MCF 10A (cell line): ENCODE measurements at regions of chr16 and their contacts with region 1.

Region 1: GRCh38 chr16:2770057-2770951 is 6.8 kb downstream of the ELOB start:
- DNase-seq: peak; percentile 52
- H3K4me3 Mint-ChIP-seq: peak overlapping the region; percentile 74
- H3K27ac Mint-ChIP-seq: peak overlapping the region; percentile 81
- H3K4me1 Mint-ChIP-seq: peaks cover 50% of the 10 kb centered on the region
- H3K27me3 Mint-ChIP-seq: no peaks in the 10 kb centered on the region
- CTCF ChIP-seq: peak; percentile 26

Region 2: DNA sequence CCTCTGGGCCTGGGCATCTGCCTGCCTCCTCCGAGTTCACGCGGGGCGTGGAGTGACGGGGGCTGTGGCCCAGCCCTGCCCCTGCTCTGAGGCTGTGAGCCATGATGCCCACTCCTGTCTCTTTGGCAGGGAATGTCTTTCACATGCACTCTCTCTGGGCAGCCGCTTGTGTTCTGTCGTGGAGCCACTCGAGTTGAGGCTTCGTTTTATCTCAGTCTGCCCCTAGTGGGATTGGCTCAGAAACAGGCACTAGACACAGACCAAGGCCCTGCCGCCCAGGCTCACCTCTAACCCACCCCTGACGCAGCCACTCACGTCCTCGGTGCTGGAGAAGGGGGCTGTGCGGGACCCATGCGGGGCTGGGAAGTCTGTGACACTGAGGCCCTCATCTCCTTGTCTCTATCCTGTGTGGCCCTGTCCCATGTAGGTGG is 155.5 kb before region 1 on chr16:
- CTCF ChIA-PET with region 1: no interaction called
- POLR2A ChIA-PET with region 1: no interaction called
- intact Hi-C with region 1: no loop called
- DNase-seq: no peak
- H3K4me3 Mint-ChIP-seq: no peak overlapping the region
- H3K27ac Mint-ChIP-seq: no peak overlapping the region
- H3K4me1 Mint-ChIP-seq: no peaks in the 10 kb centered on the region
- H3K27me3 Mint-ChIP-seq: no peaks in the 10 kb centered on the region
- CTCF ChIP-seq: no peak

Region 3: GRCh38 chr16:2682209-2683021 is 87.9 kb before region 1 on chr16 and contains the start of gene KCTD5:
- CTCF ChIA-PET with region 1: no interaction called
- POLR2A ChIA-PET with region 1: interaction called, 19 read pairs
- intact Hi-C with region 1: no loop called
- DNase-seq: peak; percentile 94
- H3K4me3 Mint-ChIP-seq: peak within 1 kb of the TSS; percentile 96
- H3K27ac Mint-ChIP-seq: peak within 1 kb of the TSS; percentile 97
- H3K4me1 Mint-ChIP-seq: no peaks in the 10 kb centered on the region
- H3K27me3 Mint-ChIP-seq: no peaks in the 10 kb centered on the region
- CTCF ChIP-seq: no peak
- total RNA-seq, gene KCTD5: 49.4 and 51.6 TPM in 2 replicates

Region 4: GRCh38 chr16:2720719-2721633 is 49.3 kb before region 1 on chr16:
- CTCF ChIA-PET with region 1: no interaction called
- POLR2A ChIA-PET with region 1: interaction called, 10 read pairs
- intact Hi-C with region 1: loop called (anchors 1 kb)
- DNase-seq: peak; percentile 86
- H3K4me3 Mint-ChIP-seq: peak overlapping the region; percentile 73
- H3K27ac Mint-ChIP-seq: peak overlapping the region; percentile 46
- H3K4me1 Mint-ChIP-seq: peaks cover 6% of the 10 kb centered on the region
- H3K27me3 Mint-ChIP-seq: no peaks in the 10 kb centered on the region
- CTCF ChIP-seq: peak; percentile 78

Region 5: DNA sequence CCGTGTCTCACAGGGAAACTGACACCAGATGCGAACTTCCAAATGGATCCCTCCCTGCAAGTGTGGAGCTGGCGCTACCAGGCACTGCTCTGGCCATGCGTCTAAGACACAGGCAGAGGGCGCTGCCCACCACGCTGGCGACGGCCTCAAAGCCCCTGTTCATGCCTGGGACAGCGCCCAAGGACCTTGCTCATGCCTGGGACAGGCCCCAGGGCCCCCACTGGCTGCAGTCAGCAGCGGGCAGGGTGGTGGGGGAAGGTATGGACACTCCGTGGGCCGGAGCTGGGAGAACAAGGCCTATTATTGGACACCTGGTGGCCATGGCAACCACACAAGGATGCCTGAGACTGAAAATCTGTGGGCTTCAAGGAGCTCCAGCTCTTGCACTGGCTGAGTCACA is 68.6 kb after region 1 on chr16:
- CTCF ChIA-PET with region 1: no interaction called
- POLR2A ChIA-PET with region 1: no interaction called
- intact Hi-C with region 1: loop called (anchors 2 kb)
- DNase-seq: peak; percentile 69
- H3K4me3 Mint-ChIP-seq: no peak overlapping the region
- H3K27ac Mint-ChIP-seq: no peak overlapping the region
- H3K4me1 Mint-ChIP-seq: peaks cover 31% of the 10 kb centered on the region
- H3K27me3 Mint-ChIP-seq: no peaks in the 10 kb centered on the region
- CTCF ChIP-seq: peak; percentile 80

Region 6: GRCh38 chr16:2867987-2868789 is 97.9 kb after region 1 on chr16:
- CTCF ChIA-PET with region 1: interaction called, 15 read pairs
- POLR2A ChIA-PET with region 1: interaction called, 61 read pairs
- intact Hi-C with region 1: loop called (anchors 2 kb)
- DNase-seq: peak; percentile 91
- H3K4me3 Mint-ChIP-seq: peak overlapping the region; percentile 89
- H3K27ac Mint-ChIP-seq: peak overlapping the region; percentile 94
- H3K4me1 Mint-ChIP-seq: peaks cover 4% of the 10 kb centered on the region
- H3K27me3 Mint-ChIP-seq: no peaks in the 10 kb centered on the region
- CTCF ChIP-seq: peak; percentile 94

Region 7: GRCh38 chr16:2883027-2883851 is 112.9 kb after region 1 on chr16 and contains the start of gene FLYWCH2:
- CTCF ChIA-PET with region 1: no interaction called
- POLR2A ChIA-PET with region 1: interaction called, 21 read pairs
- intact Hi-C with region 1: no loop called
- DNase-seq: peak; percentile 96
- H3K4me3 Mint-ChIP-seq: peak within 1 kb of the TSS; percentile 77
- H3K27ac Mint-ChIP-seq: peak within 1 kb of the TSS; percentile 73
- H3K4me1 Mint-ChIP-seq: peaks cover 5% of the 10 kb centered on the region
- H3K27me3 Mint-ChIP-seq: no peaks in the 10 kb centered on the region
- CTCF ChIP-seq: no peak
- total RNA-seq, gene FLYWCH2: 24.4 and 27.7 TPM in 2 replicates

Region 8: GRCh38 chr16:2911580-2912329 is 141.5 kb after region 1 on chr16 and contains the start of gene FLYWCH1:
- CTCF ChIA-PET with region 1: interaction called, 3 read pairs
- POLR2A ChIA-PET with region 1: interaction called, 16 read pairs
- intact Hi-C with region 1: no loop called
- DNase-seq: peak; percentile 97
- H3K4me3 Mint-ChIP-seq: peak within 1 kb of the TSS; percentile 74
- H3K27ac Mint-ChIP-seq: peak within 1 kb of the TSS; percentile 81
- H3K4me1 Mint-ChIP-seq: peaks cover 19% of the 10 kb centered on the region
- H3K27me3 Mint-ChIP-seq: no peaks in the 10 kb centered on the region
- CTCF ChIP-seq: no peak
- total RNA-seq, gene FLYWCH1: 76.3 and 86.2 TPM in 2 replicates

Region 9: GRCh38 chr16:2936436-2937011 is 166.2 kb after region 1 on chr16:
- CTCF ChIA-PET with region 1: no interaction called
- POLR2A ChIA-PET with region 1: no interaction called
- intact Hi-C with region 1: no loop called
- DNase-seq: no peak
- H3K4me3 Mint-ChIP-seq: no peak overlapping the region
- H3K27ac Mint-ChIP-seq: no peak overlapping the region
- H3K4me1 Mint-ChIP-seq: no peaks in the 10 kb centered on the region
- H3K27me3 Mint-ChIP-seq: no peaks in the 10 kb centered on the region
- CTCF ChIP-seq: no peak